ENCODE measurements at regions of chr6 and their contacts with region 1.

Region 1: DNA sequence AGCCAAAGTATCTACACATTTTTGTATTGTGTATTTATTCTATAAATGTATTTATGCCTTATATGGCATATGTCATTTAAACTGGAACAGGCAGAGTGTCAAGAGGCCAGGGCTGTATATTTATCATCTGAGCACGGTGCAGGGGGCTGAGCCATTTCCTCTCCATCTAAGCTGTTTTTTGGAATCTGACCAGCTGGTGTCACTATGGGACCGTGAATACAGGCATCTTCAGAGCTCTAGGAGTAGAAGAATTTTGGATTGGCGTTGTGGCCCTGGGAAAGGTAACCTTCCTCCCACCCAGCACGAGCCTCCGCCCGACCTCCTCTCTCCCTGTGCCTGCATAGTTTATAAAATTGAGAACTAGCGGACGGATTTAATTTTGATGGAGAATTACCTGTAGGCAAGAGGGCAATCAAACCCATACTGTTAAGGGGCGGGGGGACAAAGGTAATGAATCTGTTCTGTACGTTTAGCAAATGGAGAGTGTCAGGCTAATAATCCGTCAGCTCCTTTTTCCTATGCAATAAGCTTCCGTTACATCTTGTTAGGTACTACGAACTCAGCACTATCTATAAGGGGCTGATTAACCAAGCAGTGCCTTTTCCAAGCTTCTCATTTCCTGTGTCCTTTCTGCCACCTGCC is 29.0 kb upstream of the EEF1E1 start:
- DNase-seq: peak in 2 of 6 donors; percentile 20 to 26
- ATAC-seq: peak in 3 of 4 donors; percentile 67 to 86 (median 82)
- H3K4me3 ChIP-seq: no peak overlapping the region
- H3K27ac ChIP-seq: no peak overlapping the region
- H3K4me1 ChIP-seq: no peaks in the 10 kb centered on the region
- H3K27me3 ChIP-seq: no peaks in the 10 kb centered on the region
- CTCF ChIP-seq: no peak

Region 2: DNA sequence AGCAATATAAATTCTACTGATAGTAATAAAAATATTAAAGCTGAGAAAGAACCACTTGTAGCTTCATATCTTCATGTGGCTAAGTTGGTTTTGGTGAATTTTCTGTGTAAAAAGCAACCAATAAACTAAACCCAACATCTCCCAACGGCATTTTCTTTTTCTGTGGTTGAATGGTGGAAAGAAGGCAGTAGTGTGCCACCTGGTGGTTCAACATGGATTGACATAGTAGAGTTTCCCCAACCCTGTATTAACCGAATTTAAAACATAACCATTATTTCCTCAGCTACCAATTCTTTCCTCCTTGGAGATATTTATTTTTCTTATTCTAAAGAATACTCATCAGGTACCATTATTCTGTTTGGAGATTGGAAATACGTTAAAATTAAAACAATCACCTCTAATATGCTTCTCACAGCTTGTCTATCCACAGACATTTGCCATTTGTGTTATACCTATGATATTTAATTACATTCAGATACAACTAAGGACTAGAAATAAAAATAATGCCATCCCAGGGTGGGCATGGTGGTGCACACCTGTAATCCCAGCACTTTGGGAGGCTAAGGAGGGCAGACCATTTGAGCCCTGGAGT is 88.1 kb after region 1 on chr6:
- intact Hi-C with region 1: loop called in 1 of 3 experiments (anchors 5 kb)
- DNase-seq: peak in 3 of 6 donors; percentile 4 to 46 (median 20)
- ATAC-seq: peak in 3 of 4 donors; percentile 84 to 87 (median 85)
- H3K4me3 ChIP-seq: no peak overlapping the region
- H3K27ac ChIP-seq: no peak overlapping the region
- H3K4me1 ChIP-seq: no peaks in the 10 kb centered on the region
- H3K27me3 ChIP-seq: peaks cover 0 to 7% (median 0%) of the 10 kb centered on the region in 4 donors
- CTCF ChIP-seq: peak; percentile 32 to 77 (median 70)